Activated B cell treated with CpG ODN at 0.5 μM for 24 hours (primary cell): ENCODE measurements at regions of chr14 and their contacts with region 1.

Region 1: GRCh38 chr14:21557084-21557901 is 22.6 kb downstream of the OR10G3 start:
- DNase-seq: no peak
- ATAC-seq: peak; percentile 49
- H3K4me3 Mint-ChIP-seq: peak overlapping the region; percentile 50
- H3K27ac Mint-ChIP-seq: peak overlapping the region; percentile 33
- H3K4me1 Mint-ChIP-seq: peaks cover 3% of the 10 kb centered on the region
- H3K27me3 Mint-ChIP-seq: no peaks in the 10 kb centered on the region
- CTCF ChIP-seq: no peak

Region 2: DNA sequence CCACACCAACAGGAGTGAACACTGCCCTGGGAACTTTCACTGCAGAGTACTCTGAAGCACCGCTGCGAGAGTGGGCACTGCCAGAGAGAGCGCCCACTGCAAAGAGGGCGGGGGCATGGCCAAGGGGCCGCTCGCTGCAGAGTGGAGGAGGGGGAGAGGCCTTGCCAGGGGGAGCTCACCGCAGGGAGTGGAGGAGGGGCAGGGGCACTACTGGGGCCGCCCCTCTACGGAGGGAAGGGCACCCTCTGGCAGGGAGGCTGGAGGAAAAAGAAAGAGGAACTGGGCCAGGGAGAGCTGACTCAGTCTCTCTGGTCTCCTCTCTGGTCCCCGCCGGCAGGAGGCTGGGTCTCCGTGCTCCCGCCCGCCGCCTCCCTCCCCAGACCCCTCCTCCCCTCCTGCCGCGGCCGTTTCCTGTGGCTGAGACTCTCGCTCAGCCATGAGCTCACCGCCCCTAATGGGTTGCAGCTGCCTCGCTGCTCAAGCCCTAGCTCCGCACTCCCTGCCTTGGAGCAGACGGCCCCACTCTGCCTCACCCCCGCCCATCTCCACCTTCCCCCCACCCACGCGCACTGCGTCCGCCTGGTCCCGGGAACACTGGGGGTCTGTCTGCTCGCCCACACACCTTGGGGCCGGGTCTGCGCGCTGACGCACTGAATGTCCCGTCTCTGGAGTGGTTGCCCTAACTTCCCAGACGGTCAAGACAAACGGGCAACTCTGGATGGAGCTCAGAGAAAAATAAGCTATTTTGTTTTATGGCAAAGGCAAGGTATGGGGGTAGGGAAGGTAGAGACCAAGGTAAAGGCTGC is 485.9 kb before region 1 on chr14:
- CTCF ChIA-PET with region 1: no interaction called
- POLR2A ChIA-PET with region 1: no interaction called
- intact Hi-C with region 1: loop called (anchors 1 kb)
- DNase-seq: peak; percentile 63
- ATAC-seq: peak; percentile 72
- H3K4me3 Mint-ChIP-seq: peak overlapping the region; percentile 83
- H3K27ac Mint-ChIP-seq: peak overlapping the region; percentile 41
- H3K4me1 Mint-ChIP-seq: peaks cover 42% of the 10 kb centered on the region
- H3K27me3 Mint-ChIP-seq: peaks cover 11% of the 10 kb centered on the region
- CTCF ChIP-seq: no peak

Region 3: GRCh38 chr14:21241218-21241819 is 316.0 kb before region 1 on chr14:
- CTCF ChIA-PET with region 1: no interaction called
- POLR2A ChIA-PET with region 1: no interaction called
- intact Hi-C with region 1: loop called (anchors 5 kb)
- DNase-seq: no peak
- ATAC-seq: no peak
- H3K4me3 Mint-ChIP-seq: no peak overlapping the region
- H3K27ac Mint-ChIP-seq: no peak overlapping the region
- H3K4me1 Mint-ChIP-seq: peaks cover 48% of the 10 kb centered on the region
- H3K27me3 Mint-ChIP-seq: no peaks in the 10 kb centered on the region
- CTCF ChIP-seq: no peak

Region 4: DNA sequence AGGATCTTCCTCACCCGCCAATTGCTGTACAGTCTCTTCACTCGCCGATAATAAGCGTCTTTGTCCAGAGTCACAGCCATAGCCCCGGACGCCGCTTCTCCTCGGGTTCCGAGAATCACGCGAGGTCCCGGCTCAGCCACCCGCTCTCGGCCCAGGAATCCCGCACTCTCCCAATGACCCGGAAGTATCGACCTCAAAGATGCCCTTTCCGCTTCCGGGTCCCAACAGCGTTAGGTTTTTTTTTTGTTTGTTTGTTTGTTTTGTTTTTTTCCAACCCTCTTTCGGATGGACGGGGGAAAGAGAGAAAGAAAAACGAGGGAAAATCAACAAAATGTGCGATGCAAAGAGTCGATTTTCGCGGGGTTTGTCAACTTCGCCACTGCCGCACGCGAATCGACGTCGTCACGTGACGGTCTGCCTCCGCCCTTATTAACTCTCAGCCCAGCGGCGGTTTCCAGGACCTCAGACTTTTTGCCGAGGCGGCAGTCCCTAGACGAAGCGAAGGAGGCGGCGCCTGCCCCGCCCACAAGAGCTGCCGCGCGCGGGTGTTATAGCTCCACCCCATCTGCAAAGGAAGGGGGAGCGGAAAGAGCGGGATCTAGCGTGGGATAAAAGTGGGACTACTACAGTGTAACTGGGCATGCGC is 173.3 kb before region 1 on chr14 and contains the start of gene SUPT16H:
- CTCF ChIA-PET with region 1: no interaction called
- POLR2A ChIA-PET with region 1: no interaction called
- intact Hi-C with region 1: loop called (anchors 1 kb)
- DNase-seq: peak; percentile 87
- ATAC-seq: peak; percentile 91
- H3K4me3 Mint-ChIP-seq: peak within 1 kb of the TSS; percentile 96
- H3K27ac Mint-ChIP-seq: peak within 1 kb of the TSS; percentile 99
- H3K4me1 Mint-ChIP-seq: peaks cover 40% of the 10 kb centered on the region
- H3K27me3 Mint-ChIP-seq: no peaks in the 10 kb centered on the region
- CTCF ChIP-seq: no peak
- total RNA-seq, gene SUPT16H: 100 and 102 TPM in 2 replicates

Region 5: GRCh38 chr14:21455911-21456667 is 101.2 kb before region 1 on chr14 and contains the start of gene CHD8:
- CTCF ChIA-PET with region 1: interaction called, 4 read pairs
- POLR2A ChIA-PET with region 1: interaction called, 7 read pairs
- intact Hi-C with region 1: loop called (anchors 1 kb)
- DNase-seq: peak; percentile 91
- ATAC-seq: peak; percentile 97
- H3K4me3 Mint-ChIP-seq: peak within 1 kb of the TSS; percentile 98
- H3K27ac Mint-ChIP-seq: peak within 1 kb of the TSS; percentile 99
- H3K4me1 Mint-ChIP-seq: peaks cover 34% of the 10 kb centered on the region
- H3K27me3 Mint-ChIP-seq: no peaks in the 10 kb centered on the region
- CTCF ChIP-seq: no peak
- total RNA-seq, gene CHD8: 113 and 133 TPM in 2 replicates

Region 6: GRCh38 chr14:21498553-21499526 is 58.5 kb before region 1 on chr14:
- CTCF ChIA-PET with region 1: interaction called, 47 read pairs
- POLR2A ChIA-PET with region 1: no interaction called
- intact Hi-C with region 1: loop called (anchors 1 kb)
- DNase-seq: no peak
- ATAC-seq: peak; percentile 70
- H3K4me3 Mint-ChIP-seq: no peak overlapping the region
- H3K27ac Mint-ChIP-seq: no peak overlapping the region
- H3K4me1 Mint-ChIP-seq: no peaks in the 10 kb centered on the region
- H3K27me3 Mint-ChIP-seq: no peaks in the 10 kb centered on the region
- CTCF ChIP-seq: no peak